ENCODE measurements at regions of chr2 and their contacts with region 1.

Region 1: DNA sequence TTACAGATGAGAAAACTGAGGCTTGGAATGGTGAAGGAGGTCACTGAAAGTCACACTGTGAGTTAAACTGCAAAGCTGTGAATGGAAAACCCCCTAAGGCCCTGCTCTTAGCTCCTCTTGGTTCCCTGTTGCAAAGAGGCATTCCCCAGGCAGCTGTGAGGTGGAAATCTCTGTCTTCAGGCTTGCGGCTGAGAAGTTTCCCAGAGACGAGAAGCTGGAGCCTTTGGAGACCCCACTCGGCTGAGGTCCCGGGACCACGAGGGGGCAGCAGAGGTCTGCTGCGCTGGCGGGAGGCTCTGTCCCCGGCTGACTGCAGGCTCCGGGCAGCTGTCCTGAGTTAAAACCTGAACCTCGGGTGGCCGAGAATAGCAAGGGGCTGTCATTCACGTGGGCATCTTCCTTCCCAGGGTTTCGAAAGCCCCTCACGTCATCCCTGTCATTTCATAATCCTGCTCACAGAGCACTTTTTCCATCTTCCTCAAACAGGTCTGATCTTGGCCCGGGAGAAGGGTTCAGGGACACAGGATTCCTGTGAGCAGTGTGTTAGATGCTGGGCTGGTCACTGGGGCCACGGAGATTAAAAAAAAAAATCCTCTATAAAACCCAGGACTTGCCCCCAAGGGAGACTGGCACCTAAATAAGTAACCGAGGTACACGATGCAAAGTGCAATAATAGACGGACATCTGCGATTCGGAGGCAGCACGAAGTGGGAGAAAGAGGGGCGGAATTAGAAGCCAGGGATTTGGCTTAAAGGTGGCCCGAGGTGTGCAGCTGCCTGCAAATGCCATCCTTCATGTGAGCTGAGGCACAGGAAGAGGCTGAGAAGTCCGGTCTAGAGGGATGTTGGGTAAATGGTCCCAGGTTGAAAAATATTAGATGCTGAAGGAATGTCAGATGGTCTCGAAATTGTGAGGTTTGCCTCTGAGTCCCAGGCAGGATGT is 24.6 kb upstream of the ATOH8 start:
- DNase-seq: peak; percentile 47
- H3K4me3 Mint-ChIP-seq: no peak overlapping the region
- H3K27ac Mint-ChIP-seq: no peak overlapping the region
- H3K4me1 Mint-ChIP-seq: peaks cover 9% of the 10 kb centered on the region
- H3K27me3 Mint-ChIP-seq: peaks cover 28% of the 10 kb centered on the region

Region 2: GRCh38 chr2:85804583-85804982 is 75.4 kb after region 1 on chr2:
- intact Hi-C with region 1: loop called (anchors 2 kb)
- DNase-seq: no peak
- H3K4me3 Mint-ChIP-seq: no peak overlapping the region
- H3K27ac Mint-ChIP-seq: no peak overlapping the region
- H3K4me1 Mint-ChIP-seq: peaks cover 6% of the 10 kb centered on the region
- H3K27me3 Mint-ChIP-seq: peaks cover 21% of the 10 kb centered on the region

Region 3: DNA sequence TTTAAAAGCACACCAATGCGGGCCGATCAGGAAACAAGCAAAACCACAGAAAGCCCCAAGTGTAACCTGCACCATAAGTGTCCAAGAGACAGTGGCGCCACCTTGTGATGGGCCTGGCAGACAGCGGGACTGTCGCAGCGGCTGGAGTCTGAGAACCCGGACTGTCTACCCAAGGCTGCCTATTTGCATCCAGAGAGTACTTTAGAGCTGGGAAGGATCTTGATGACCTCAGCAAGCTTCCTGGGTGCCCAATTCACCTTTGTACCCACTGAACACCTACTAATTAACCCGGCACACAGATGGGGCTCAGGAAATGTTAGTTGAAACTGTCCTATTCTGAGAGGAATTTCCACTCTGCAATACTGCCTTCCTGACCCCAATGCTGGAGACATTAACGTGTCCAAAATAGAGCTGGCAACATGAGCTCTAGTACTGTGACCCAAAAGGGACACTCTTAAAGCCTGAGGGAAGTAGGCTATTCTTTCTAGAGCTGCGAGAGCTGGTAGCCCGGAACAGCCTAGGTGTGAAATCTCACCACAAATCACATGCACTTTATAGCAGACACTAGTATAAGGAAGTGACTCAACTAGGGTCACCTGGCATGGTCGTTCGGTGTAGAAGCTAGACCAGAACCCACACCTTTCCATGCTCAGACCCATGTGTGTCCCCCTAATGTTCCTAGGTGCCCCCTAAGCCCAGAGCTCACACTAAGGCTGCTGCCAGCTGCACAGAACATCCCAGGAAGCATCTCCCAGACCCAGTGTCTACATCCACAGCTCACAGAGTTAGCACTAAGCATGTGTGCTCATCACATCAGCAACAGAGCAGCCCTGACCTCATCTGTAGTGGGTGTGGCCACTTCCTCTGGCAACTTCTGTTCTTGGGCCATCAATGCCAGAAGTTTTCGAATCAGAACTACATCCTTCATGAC is 351.1 kb after region 1 on chr2:
- intact Hi-C with region 1: loop called (anchors 10 kb)
- DNase-seq: peak; percentile 74
- H3K4me3 Mint-ChIP-seq: no peak overlapping the region
- H3K27ac Mint-ChIP-seq: no peak overlapping the region
- H3K4me1 Mint-ChIP-seq: peaks cover 40% of the 10 kb centered on the region
- H3K27me3 Mint-ChIP-seq: no peaks in the 10 kb centered on the region

Measured in activated T-helper 2 cell treated with anti-CD3 and anti-CD28 coated beads, Interferon-gamma antibody, Interleukin-2, Interleukin-4, amounts not matched to agents 10 μg/mL and 5 μg/mL and 100 μg/mL, durations not matched to agents 14 hours and 24 hours and 36 hours (primary cell).